K562 (cell line): ENCODE measurements at regions of chr6 and their contacts with region 1.

Region 1: DNA sequence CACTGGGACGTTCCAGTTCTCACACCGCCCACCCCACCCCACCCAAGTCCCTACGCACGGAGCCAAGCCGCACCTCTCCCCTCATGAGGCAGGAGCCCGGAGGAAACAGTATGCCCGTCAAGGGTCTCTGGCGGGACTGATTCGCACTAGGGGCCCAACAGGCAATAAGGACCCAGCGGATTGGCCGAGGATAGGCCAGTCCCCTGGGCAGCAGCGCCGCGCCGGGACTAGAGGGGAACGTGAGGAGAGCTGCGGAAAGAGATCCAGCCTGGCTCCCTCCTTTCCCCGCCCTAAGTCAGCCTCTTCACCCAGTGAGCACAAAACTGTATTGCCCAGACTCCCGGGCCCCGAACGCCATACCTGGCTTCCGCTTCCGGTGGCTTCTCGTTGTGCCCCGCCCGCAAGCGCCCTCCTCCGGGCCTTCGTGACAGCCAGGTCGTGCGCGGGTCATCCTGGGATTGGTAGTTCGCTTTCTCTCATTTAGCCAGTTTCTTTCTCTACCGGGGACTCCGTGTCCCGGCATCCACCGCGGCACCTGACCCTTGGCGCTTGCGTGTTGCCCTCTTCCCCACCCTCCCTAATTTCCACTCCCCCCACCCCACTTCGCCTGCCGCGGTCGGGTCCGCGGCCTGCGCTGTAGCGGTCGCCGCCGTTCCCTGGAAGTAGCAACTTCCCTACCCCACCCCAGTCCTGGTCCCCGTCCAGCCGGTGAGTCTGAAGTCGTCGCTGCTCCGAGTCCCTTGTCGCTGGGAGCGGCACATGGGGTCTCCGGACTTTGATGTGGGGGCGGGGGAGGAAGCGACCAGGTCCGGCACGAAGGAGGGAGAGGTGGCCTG is at the start of gene CSNK2B:
- DNase-seq: peak; percentile 98 to 100 (median 99)
- ATAC-seq: peak; percentile 85
- H3K4me3 ChIP-seq: peak within 1 kb of the TSS; percentile 66
- H3K27ac ChIP-seq: peak within 1 kb of the TSS; percentile 97
- H3K4me1 ChIP-seq: peaks cover 36 to 39% of the 10 kb centered on the region in 2 experiments; a peak in 4 of 5 replicates
- H3K27me3 ChIP-seq: no peaks in the 10 kb centered on the region
- CTCF ChIP-seq: peak; percentile 18 to 42 (median 33); a peak in 4 of 6 replicates
- EP300 ChIP-seq: peak; percentile 47
- POLR2A ChIP-seq: peak; percentile 99
- RAD21 ChIP-seq: no peak
- polyA plus RNA-seq, gene CSNK2B: 870 to 972 TPM

Region 2: DNA sequence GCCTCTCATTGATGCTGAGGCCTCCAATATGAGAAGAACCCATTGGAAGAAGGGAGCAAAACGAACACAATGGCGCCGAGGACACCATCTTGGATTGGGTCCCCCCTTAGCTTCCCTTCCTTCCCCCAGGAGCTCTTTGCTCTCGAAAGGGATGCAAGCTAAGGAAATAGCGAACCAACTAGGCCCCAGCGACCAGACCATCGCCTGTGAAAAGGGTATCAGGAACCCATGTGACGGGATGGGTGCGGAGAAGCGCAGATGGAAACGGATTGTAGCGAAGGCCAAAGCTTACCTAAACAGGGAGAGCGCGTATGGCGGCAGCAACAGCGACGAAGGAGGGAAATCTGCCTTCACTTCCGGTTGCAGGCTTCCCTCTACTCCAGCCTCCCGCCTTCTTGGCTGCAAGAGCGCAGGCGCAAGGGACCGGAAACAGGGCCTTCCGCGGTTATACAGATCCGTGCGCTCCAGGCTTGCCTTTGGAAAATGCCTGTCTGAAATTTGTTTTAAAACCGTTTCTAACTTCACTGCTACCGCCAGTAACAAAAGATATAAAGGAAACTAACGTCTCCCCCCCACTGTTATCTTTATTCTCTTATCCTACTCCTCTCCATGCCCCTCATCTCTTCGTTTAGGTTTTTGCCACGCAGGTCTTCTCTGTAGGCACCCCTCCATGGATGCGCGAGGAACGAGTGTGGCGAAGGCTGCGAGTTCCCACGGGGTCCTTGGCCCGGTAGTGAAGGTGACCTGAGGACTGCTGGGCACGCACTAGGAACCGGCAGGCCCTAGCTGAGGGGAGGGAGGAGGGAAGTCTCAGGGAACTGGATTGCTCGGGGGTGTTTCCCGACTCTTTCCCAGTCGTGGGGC is 123.8 kb before region 1 on chr6 and contains the start of gene DDX39B:
- CTCF ChIA-PET with region 1: no interaction called
- POLR2A ChIA-PET with region 1: interaction called, 12 read pairs
- in situ Hi-C with region 1: loop called (anchors 5 kb)
- intact Hi-C with region 1: loop called (anchors 2 kb)
- DNase-seq: peak; percentile 92 to 99 (median 95)
- ATAC-seq: peak; percentile 86
- H3K4me3 ChIP-seq: peak within 1 kb of the TSS; percentile 76
- H3K27ac ChIP-seq: peak within 1 kb of the TSS; percentile 98
- H3K4me1 ChIP-seq: peaks cover 10 to 24% of the 10 kb centered on the region in 2 experiments; a peak in 4 of 5 replicates
- H3K27me3 ChIP-seq: no peaks in the 10 kb centered on the region
- CTCF ChIP-seq: no peak
- EP300 ChIP-seq: peak; percentile 35; the same call in 1 of the 2 replicates
- POLR2A ChIP-seq: peak; percentile 99
- RAD21 ChIP-seq: no peak
- polyA plus RNA-seq, gene DDX39B: 479 to 565 TPM

Region 3: GRCh38 chr6:31639449-31639861 is 26.3 kb before region 1 on chr6:
- CTCF ChIA-PET with region 1: no interaction called
- POLR2A ChIA-PET with region 1: interaction called, 20 read pairs
- in situ Hi-C with region 1: no loop called
- intact Hi-C with region 1: no loop called
- DNase-seq: no peak
- ATAC-seq: no peak
- H3K4me3 ChIP-seq: no peak overlapping the region
- H3K27ac ChIP-seq: no peak overlapping the region
- H3K4me1 ChIP-seq: peaks cover 3 to 13% of the 10 kb centered on the region in 2 experiments; a peak in 4 of 5 replicates
- H3K27me3 ChIP-seq: no peaks in the 10 kb centered on the region
- CTCF ChIP-seq: no peak
- EP300 ChIP-seq: no peak
- POLR2A ChIP-seq: no peak
- RAD21 ChIP-seq: no peak

Region 4: DNA sequence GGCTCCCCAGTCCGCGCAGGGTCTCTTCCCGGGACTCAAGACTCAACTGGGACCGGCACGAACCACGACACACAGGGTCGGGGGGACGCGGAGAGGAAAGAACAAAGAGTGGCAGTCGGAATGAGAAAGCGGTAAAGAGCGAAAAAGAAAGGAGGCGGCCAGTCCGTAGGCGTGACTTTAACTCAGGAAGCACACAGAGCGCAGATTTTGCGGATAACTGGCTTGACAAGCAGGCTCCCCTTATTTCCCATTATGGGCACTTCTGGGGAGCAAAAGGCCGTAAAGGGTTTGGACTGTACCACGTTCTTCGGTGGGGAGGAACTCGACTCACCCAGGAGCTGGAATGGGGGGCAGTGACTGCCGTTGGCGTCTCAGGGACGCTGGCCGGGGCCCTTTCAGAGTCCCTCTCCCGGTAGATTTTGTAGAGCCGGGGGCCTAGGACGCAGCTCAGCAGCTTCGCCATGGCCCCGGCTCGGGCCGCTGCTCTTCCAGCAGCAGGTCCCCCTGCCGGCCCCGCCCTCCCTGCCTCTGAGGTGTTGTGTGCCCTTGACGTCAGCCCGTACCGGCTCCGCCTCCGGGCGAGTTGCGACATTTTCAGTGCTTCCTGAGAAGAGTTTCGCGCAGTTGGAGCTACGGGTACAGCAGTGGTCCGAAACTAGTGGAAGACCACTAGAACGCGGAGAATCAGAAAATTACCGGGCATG is 37.3 kb after region 1 on chr6 and contains the start of gene ABHD16A:
- CTCF ChIA-PET with region 1: no interaction called
- POLR2A ChIA-PET with region 1: interaction called, 39 read pairs
- in situ Hi-C with region 1: no loop called
- intact Hi-C with region 1: loop called (anchors 2 kb)
- DNase-seq: peak; percentile 100
- ATAC-seq: peak; percentile 95
- H3K4me3 ChIP-seq: peak within 1 kb of the TSS; percentile 68
- H3K27ac ChIP-seq: peak within 1 kb of the TSS; percentile 93
- H3K4me1 ChIP-seq: peaks cover 22 to 34% of the 10 kb centered on the region in 2 experiments
- H3K27me3 ChIP-seq: no peaks in the 10 kb centered on the region
- CTCF ChIP-seq: peak in 2 of 3 experiments; percentile 14 to 17; a peak in 1 of 6 replicates
- EP300 ChIP-seq: peak; percentile 73
- POLR2A ChIP-seq: peak; percentile 98
- RAD21 ChIP-seq: peak in 1 of 2 experiments; percentile 21; a peak in 1 of 4 replicates
- polyA plus RNA-seq, gene ABHD16A: 25.8 to 49.7 TPM

Region 5: GRCh38 chr6:31795616-31796298 is 130.0 kb after region 1 on chr6 and contains the start of gene VARS1:
- CTCF ChIA-PET with region 1: no interaction called
- POLR2A ChIA-PET with region 1: interaction called, 13 read pairs
- in situ Hi-C with region 1: no loop called
- intact Hi-C with region 1: no loop called
- DNase-seq: peak; percentile 99 to 100 (median 100)
- ATAC-seq: peak; percentile 92
- H3K4me3 ChIP-seq: peak within 1 kb of the TSS; percentile 61
- H3K27ac ChIP-seq: peak within 1 kb of the TSS; percentile 97
- H3K4me1 ChIP-seq: peaks cover 17 to 44% of the 10 kb centered on the region in 2 experiments
- H3K27me3 ChIP-seq: no peaks in the 10 kb centered on the region
- CTCF ChIP-seq: peak; percentile 99 to 100 (median 100)
- EP300 ChIP-seq: peak; percentile 59; the same call in 1 of the 2 replicates
- POLR2A ChIP-seq: peak; percentile 38; the same call in 1 of the 2 replicates
- RAD21 ChIP-seq: peak; percentile 99 to 100
- polyA plus RNA-seq, gene VARS1: 2.9 to 10.4 TPM

Region 6: GRCh38 chr6:31827286-31828079 is 161.8 kb after region 1 on chr6 and contains the start of gene HSPA1B:
- CTCF ChIA-PET with region 1: no interaction called
- POLR2A ChIA-PET with region 1: interaction called, 60 read pairs
- in situ Hi-C with region 1: no loop called
- intact Hi-C with region 1: no loop called
- DNase-seq: peak; percentile 99 to 100 (median 100)
- ATAC-seq: peak; percentile 86
- H3K4me3 ChIP-seq: peak within 1 kb of the TSS; percentile 56
- H3K27ac ChIP-seq: peak within 1 kb of the TSS; percentile 78
- H3K4me1 ChIP-seq: peaks cover 41% of the 10 kb centered on the region in 2 experiments
- H3K27me3 ChIP-seq: no peaks in the 10 kb centered on the region
- CTCF ChIP-seq: peak in 1 of 3 experiments; percentile 15; a peak in 2 of 6 replicates
- EP300 ChIP-seq: peak; percentile 89
- POLR2A ChIP-seq: peak; percentile 100
- RAD21 ChIP-seq: peak; percentile 34 to 39; a peak in 2 of 4 replicates
- polyA plus RNA-seq, gene HSPA1B: 0.27 to 0.62 TPM